ENCODE measurements at regions of chr11 and their contacts with region 1.

Region 1: DNA sequence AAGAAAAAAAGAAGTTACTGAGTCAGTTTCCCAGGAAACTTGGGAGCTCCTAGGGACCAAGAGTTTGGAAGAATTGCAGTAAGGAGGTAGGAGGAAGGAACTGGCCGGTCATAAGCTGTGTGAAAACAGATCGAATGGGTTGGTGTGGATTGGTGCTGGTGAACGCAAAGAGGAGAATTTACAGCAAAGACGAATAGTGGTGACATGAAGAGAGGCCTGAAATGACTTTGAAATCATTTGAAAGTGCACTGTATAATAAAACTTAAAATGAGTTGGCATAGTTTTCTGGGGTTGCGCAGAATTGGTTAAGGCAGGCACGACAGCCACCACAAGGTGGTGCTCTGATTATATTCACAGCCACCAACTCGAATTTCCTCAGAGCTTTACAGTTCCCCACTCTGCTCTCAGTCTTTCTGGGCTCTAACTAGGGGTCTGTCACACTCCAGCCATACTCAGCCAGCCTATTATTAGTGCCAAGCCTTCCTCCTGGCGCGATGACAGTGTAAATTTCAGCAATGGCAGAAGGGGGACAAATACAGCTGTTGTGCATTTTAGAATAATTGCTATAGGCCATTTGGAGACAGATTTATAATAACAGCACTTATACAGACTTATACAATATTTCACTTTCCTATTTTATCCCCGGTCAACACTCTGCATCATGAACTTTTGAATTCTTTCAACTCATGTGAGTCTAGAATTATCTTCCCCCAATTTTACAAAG is 8.3 kb upstream of the HTR3B start:
- DNase-seq: peak in 3 of 5 donors; percentile 26 to 42 (median 39)
- H3K4me3 ChIP-seq: no peak overlapping the region
- H3K4me3 Mint-ChIP-seq: no peak overlapping the region
- H3K27ac ChIP-seq: no peak overlapping the region
- H3K27ac Mint-ChIP-seq: no peak overlapping the region
- H3K4me1 ChIP-seq: no peaks in the 10 kb centered on the region
- H3K4me1 Mint-ChIP-seq: peaks cover 0 to 2% (median 0%) of the 10 kb centered on the region in 4 donors
- H3K27me3 ChIP-seq: no peaks in the 10 kb centered on the region
- H3K27me3 Mint-ChIP-seq: peaks cover 0 to 1% of the 10 kb centered on the region in 2 donors

Region 2: GRCh38 chr11:113942256-113942655 is 45.9 kb after region 1 on chr11:
- CTCF ChIA-PET with region 1: no interaction called
- POLR2A ChIA-PET with region 1: no interaction called
- intact Hi-C with region 1: no loop called
- DNase-seq: no peak
- H3K4me3 ChIP-seq: no peak overlapping the region
- H3K4me3 Mint-ChIP-seq: no peak overlapping the region
- H3K27ac ChIP-seq: no peak overlapping the region
- H3K27ac Mint-ChIP-seq: no peak overlapping the region
- H3K4me1 ChIP-seq: no peaks in the 10 kb centered on the region
- H3K4me1 Mint-ChIP-seq: no peaks in the 10 kb centered on the region
- H3K27me3 ChIP-seq: no peaks in the 10 kb centered on the region
- H3K27me3 Mint-ChIP-seq: peaks cover 12 to 13% of the 10 kb centered on the region in 2 donors

Region 3: DNA sequence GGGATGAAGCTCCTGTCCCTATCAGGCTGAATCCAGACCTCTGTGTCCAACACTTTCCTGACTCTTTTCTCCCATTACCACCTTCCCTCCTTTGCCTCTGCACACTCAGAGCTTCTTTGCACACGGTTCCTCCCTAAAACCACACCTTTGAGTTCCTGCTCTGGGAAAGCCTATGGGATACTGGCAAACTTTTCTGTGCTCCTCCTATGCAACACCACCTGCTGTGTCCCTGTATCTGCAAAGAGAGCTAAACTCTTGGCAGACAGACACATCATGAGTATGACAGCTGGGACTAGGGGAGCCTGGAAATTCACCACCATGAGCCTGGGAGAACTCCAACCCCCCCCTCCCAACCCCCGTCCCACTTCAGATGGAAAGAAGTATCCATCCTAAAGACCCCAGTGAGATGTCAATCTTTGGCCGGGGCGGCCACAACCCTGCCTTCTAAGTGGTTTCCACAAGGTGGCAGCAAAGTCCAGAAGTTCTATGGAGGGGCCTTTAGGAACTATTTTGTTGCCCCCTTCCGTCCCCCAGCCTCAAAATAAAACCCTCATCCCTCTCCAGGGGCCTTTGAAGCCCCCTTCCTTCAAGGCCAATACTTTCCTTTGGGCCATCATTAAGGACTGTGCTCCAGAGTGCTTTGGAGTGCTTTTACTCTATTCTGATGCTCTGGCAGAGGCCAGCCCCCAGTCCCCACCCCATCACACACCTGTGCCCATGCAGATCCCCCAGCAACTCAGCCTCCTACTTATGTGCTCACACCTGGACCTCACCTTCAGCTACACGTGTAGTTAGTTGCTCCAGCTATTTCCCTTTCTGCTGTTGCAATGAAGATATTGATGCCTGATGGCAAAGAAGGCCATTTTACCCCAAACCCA is 98.0 kb after region 1 on chr11:
- CTCF ChIA-PET with region 1: interaction called, 14 read pairs
- POLR2A ChIA-PET with region 1: no interaction called
- intact Hi-C with region 1: loop called (anchors 5 kb)
- DNase-seq: peak in 4 of 5 donors; percentile 18 to 33 (median 22)
- H3K4me3 ChIP-seq: no peak overlapping the region
- H3K4me3 Mint-ChIP-seq: no peak overlapping the region
- H3K27ac ChIP-seq: no peak overlapping the region
- H3K27ac Mint-ChIP-seq: no peak overlapping the region
- H3K4me1 ChIP-seq: no peaks in the 10 kb centered on the region
- H3K4me1 Mint-ChIP-seq: peaks cover 0 to 1% (median 0%) of the 10 kb centered on the region in 4 donors
- H3K27me3 ChIP-seq: no peaks in the 10 kb centered on the region
- H3K27me3 Mint-ChIP-seq: peaks cover 6 to 13% of the 10 kb centered on the region in 2 donors

Region 4: GRCh38 chr11:114036156-114036811 is 140.0 kb after region 1 on chr11:
- CTCF ChIA-PET with region 1: interaction called, 19 read pairs
- POLR2A ChIA-PET with region 1: no interaction called
- intact Hi-C with region 1: loop called (anchors 5 kb)
- DNase-seq: peak in 4 of 5 donors; percentile 51 to 54 (median 52)
- H3K4me3 ChIP-seq: no peak overlapping the region
- H3K4me3 Mint-ChIP-seq: peak overlapping the region in 5 of 8 donors; percentile 7 to 54 (median 28)
- H3K27ac ChIP-seq: no peak overlapping the region
- H3K27ac Mint-ChIP-seq: no peak overlapping the region
- H3K4me1 ChIP-seq: peaks cover 6% of the 10 kb centered on the region
- H3K4me1 Mint-ChIP-seq: peaks cover 0 to 9% (median 6%) of the 10 kb centered on the region in 4 donors
- H3K27me3 ChIP-seq: no peaks in the 10 kb centered on the region
- H3K27me3 Mint-ChIP-seq: no peaks in the 10 kb centered on the region

Region 5: GRCh38 chr11:114197799-114198500 is 301.6 kb after region 1 on chr11:
- CTCF ChIA-PET with region 1: interaction called, 10 read pairs
- POLR2A ChIA-PET with region 1: no interaction called
- intact Hi-C with region 1: loop called (anchors 1 kb)
- DNase-seq: no peak
- H3K4me3 ChIP-seq: no peak overlapping the region
- H3K4me3 Mint-ChIP-seq: no peak overlapping the region
- H3K27ac ChIP-seq: no peak overlapping the region
- H3K27ac Mint-ChIP-seq: peak overlapping the region in 1 of 7 donors; percentile 66
- H3K4me1 ChIP-seq: peaks cover 8% of the 10 kb centered on the region
- H3K4me1 Mint-ChIP-seq: peaks cover 5 to 21% (median 14%) of the 10 kb centered on the region in 4 donors
- H3K27me3 ChIP-seq: no peaks in the 10 kb centered on the region
- H3K27me3 Mint-ChIP-seq: no peaks in the 10 kb centered on the region